ENCODE measurements at regions of chr14 and their contacts with region 1.

Region 1: DNA sequence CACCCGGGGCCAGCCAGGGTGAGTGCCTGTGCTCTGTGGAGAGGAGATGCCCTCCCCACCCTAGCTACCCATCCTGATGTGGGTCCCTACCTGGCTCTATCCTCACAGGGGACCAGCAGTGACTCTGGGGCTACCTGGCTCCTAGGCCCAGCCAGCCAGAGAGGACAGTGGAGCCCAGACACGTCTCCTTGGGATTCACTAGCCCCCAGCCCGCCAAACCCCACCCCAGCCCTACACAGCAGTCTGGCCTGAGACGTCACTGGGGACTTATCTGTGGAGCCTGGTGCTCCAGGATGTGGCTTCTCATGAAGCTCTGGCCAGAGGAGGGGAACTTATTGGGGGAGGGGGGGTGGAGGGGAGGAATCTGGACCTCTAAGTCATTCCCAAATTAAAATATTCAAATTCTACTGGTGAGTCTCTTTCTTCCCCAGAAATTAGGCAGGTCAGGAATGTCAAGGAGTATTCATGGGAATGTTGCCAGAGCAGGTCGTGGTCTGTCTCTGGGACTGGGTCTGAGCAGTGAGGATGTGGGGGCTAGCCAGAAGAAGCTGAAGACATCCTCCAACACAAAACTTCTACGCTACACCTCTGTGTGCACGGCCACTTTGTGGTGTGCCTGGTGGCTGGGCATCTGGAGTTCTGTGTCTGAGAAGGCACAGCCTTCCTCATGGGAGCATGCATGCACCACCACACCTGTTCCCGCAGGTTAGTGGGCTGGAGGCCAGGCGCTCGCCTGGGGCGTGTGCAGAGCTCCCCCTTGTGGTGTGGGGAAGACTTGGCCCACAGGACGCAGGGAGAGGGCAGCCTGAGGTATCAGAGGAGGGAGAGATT is 2.7 kb downstream of the CMTM5 start:
- DNase-seq: peak; percentile 28 to 66 (median 58)
- H3K4me3 ChIP-seq: no peak overlapping the region
- H3K27ac ChIP-seq: no peak overlapping the region
- H3K4me1 ChIP-seq: no peaks in the 10 kb centered on the region
- H3K27me3 ChIP-seq: no peaks in the 10 kb centered on the region
- CTCF ChIP-seq: peak; percentile 59 to 76 (median 63)
- EP300 ChIP-seq: no peak
- POLR2A ChIP-seq: no peak

Region 2: GRCh38 chr14:23269193-23269592 is 110.4 kb before region 1 on chr14:
- intact Hi-C with region 1: loop called in 3 of 4 experiments (anchors 5 to 10 kb)
- DNase-seq: no peak
- H3K4me3 ChIP-seq: no peak overlapping the region
- H3K27ac ChIP-seq: no peak overlapping the region
- H3K4me1 ChIP-seq: no peaks in the 10 kb centered on the region
- H3K27me3 ChIP-seq: no peaks in the 10 kb centered on the region
- CTCF ChIP-seq: no peak
- EP300 ChIP-seq: no peak
- POLR2A ChIP-seq: no peak

Region 3: DNA sequence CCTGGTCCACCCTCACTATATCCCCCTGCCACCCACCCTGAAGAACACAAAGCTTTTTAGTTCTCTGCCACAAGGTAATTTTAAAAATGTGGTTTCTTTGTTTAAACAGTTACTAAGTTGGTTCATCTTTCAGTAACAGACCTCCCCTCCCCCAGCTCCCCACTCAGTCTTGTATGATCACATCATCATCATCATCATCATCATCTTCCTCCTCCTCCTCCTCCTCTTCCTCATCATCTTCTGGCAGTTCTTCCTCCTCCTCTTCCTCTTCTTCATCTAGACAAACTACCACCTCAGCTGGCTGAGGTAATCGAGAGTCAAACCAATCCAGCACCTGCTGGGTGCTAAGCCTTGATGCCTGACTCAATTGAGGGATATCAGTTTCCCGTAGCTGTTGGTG is 104.2 kb before region 1 on chr14:
- intact Hi-C with region 1: loop called in 1 of 4 experiments (anchors 10 kb)
- DNase-seq: no peak
- H3K4me3 ChIP-seq: no peak overlapping the region
- H3K27ac ChIP-seq: no peak overlapping the region
- H3K4me1 ChIP-seq: no peaks in the 10 kb centered on the region
- H3K27me3 ChIP-seq: no peaks in the 10 kb centered on the region
- CTCF ChIP-seq: no peak
- EP300 ChIP-seq: no peak
- POLR2A ChIP-seq: no peak

Region 4: GRCh38 chr14:23327947-23328744 is 51.4 kb before region 1 on chr14:
- intact Hi-C with region 1: loop called in 3 of 4 experiments (anchors 5 kb)
- DNase-seq: peak in 4 of 5 donors; percentile 59 to 84 (median 66)
- H3K4me3 ChIP-seq: no peak overlapping the region
- H3K27ac ChIP-seq: no peak overlapping the region
- H3K4me1 ChIP-seq: peaks cover 2% of the 10 kb centered on the region
- H3K27me3 ChIP-seq: no peaks in the 10 kb centered on the region
- CTCF ChIP-seq: peak; percentile 68 to 85 (median 83)
- EP300 ChIP-seq: no peak
- POLR2A ChIP-seq: no peak